Head of caudate nucleus (tissue), 42 donors: ENCODE measurements at regions of chr11 and their contacts with region 1.

Region 1: DNA sequence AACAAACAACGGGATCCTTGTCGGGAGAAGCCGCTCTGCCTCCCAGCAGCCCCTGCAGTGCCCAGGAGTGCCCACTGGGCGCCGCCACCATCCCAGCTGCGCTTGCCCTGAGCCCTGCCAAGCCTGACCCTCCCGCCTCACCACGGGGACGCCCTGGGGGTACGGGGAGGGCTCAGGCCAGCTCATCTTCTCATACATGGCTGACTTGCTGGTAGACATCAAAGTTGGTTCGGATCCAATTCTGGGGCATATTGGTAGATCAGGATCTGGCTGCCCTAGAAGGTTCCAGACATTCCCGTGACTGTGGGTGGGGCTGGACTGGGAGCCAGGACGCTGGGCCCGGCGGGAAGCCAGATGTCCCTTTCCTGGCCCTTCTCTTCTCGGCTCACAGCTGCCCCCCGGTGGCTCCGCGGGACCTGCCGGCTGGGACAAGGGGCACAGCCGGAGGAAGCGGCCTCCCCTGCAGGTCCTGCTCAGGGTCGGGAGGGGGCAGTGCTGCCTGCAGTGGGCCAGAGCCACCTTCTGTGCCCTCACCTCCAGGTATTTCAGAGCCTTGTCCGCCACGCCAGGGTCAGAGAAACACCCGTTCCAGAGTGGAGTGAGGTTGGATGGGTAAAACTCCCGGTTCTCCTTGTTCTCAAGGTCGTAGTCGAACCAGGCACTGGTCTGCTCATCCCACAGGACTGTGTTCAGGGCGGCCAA is 10.6 kb upstream of the TREH start:
- DNase-seq: peak; percentile 89 to 99 (median 95)

Region 2: GRCh38 chr11:118503216-118503615 is 186.8 kb before region 1 on chr11:
- intact Hi-C with region 1: no loop called
- DNase-seq: no peak

Region 3: DNA sequence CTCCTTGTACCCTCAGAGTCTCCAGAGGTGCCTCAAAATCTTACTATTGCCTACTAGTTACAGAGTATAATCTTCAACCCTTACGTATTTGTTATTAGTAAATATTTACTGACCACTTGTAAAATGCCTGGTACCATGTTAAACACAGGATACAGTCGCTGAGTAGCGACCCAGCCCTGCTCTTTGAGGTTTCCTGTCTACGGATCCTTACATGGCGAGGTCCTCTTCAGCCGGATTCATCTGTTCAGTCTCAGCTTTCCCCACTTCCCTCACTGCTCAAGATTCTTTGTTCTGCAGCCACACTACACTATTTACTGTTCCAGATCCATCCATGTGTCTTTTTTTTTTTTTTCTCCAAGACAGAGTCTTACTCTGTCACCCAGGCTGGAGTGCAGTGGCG is 175.9 kb before region 1 on chr11:
- intact Hi-C with region 1: no loop called
- DNase-seq: no peak

Region 4: GRCh38 chr11:118705111-118705741 is 15.2 kb after region 1 on chr11:
- intact Hi-C with region 1: loop called (anchors 1 kb)
- DNase-seq: peak; percentile 29 to 83 (median 60)

Region 5: DNA sequence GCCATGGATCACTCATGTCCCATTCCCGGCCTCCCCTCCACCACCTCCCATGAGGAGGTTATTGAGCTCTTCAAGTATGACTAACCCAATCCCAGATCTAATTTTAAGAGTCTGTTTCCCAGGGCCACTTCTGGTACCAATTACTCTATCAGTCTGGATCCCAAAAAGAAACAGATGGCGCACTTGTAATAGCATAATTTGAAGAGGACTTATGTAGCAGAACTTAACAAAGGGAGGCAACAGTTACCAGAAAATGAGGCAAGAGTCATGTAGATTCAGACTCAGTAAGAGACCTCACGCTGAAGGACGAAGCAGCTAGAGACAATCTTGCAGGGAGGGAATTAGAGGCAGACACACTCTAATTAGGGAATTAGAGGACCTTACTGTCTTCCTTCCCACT is 54.0 kb after region 1 on chr11:
- intact Hi-C with region 1: no loop called
- DNase-seq: no peak

Region 6: GRCh38 chr11:118791111-118791965 is 101.3 kb after region 1 on chr11 and contains the start of gene DDX6:
- intact Hi-C with region 1: loop called (anchors 1 kb)
- DNase-seq: peak; percentile 73 to 98 (median 94)

Region 7: DNA sequence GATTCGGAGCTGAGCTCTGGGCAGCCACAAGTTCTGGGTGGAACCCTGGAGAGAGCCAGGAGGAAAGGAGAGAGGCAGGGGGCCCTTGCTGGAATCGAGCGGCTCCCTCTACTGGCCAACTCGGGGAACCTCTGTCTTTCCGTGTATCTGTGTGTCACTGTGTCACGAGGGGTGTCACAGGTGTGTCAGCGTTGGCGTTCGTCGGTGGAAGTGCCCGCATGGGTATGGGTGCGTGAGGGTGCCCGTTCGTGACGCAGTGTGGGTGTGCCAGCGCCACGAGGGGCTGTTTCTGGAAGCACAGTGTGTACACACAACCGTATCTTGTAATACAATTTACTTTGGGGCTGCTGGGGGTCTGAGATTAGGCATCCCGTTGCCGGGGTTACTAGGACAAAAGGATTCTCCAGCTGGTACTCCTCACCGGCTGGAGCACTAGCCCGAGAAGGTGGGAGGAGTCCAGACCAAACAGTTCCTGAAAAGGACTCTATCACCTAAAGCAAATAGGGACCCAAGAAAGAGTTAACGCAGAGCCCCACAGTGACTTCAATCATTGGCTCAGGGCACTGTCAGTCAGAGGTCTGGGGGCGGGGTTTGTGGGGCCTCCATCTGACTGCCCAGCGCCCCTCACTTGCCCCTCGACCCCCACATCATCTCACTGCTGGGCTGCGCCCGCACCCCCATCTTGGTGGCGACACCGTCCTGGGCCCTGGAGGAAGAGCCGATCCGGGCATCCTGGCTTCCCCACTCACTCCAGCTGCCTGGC is 238.3 kb after region 1 on chr11:
- intact Hi-C with region 1: loop called (anchors 10 kb)
- DNase-seq: peak; percentile 87 to 98 (median 94)